ENCODE measurements at regions of chr6 and their contacts with region 1.

Region 1: DNA sequence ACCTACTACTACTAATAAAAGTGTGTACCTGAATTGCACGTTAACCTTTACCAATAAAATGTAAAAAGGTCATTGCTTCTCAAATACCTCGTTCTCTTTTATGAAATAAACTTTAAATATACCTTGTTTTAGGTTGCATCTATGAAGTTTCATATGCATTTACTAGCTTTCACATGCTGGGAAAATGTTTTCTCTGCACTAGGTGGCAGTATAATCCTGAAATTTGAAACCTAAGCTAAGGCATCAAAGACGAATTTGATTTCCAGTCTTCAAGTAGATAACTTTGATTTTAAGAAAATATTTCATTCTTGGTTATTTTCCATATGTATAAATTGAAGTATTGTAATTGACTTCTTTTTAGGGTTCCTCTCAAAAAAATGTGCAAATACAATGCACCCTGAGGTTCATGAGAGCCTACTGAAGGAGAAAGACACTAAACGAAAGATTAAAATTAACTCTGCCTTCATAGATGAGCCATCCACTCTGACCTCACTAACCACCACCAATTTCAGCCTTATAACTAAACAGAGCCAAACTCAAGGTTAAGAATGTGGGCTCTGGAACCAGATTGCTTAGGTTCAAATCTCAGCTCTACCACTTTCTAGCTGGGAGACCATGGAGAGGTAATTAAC is 7.3 kb upstream of the COL9A1 start:
- DNase-seq: no peak
- CTCF ChIP-seq: peak; percentile 64

Region 2: GRCh38 chr6:69957985-69958559 is 352.1 kb before region 1 on chr6:
- CTCF ChIA-PET with region 1: no interaction called
- POLR2A ChIA-PET with region 1: no interaction called
- DNase-seq: no peak
- CTCF ChIP-seq: no peak

Region 3: DNA sequence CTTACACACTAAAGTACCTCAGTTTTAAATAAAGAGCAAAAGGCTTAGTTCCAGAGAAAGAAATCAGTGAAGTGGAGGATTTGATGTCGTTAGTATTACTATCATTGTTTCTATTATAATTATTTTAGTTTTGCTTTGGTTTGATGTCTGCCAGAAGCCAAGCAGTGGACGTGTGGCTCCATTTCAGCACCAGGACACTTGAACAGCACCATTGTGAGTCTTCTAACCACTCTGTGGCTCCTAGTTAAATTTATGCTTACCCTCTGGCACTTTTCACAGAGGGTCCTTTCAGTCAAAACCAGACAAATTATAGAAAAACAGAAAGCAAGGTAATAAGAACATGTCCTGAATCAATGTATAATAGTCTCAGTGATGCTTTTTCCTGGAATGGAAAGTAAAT is 10.7 kb before region 1 on chr6:
- CTCF ChIA-PET with region 1: interaction called, 58 read pairs
- POLR2A ChIA-PET with region 1: no interaction called
- DNase-seq: no peak
- CTCF ChIP-seq: no peak

Region 4: DNA sequence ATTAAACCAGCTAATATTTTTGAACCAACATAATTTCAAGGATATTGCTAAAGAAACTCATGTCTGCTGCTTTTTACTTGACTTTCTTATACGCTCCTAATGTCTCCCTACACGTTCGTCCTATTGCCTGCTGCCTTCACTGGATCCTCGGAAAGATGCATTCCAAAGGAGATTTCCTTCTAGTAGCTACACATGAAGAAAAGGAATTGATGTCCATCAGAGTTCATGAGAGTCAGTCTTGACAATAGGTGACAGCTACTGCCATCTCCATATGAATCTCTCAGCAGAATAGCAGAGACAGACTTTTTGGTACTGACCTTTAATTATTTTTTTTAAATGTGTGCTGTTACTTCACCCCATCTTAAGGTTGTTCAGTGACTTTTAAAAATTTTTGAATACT is 16.9 kb after region 1 on chr6:
- CTCF ChIA-PET with region 1: interaction called, 36 read pairs
- POLR2A ChIA-PET with region 1: no interaction called
- DNase-seq: no peak
- CTCF ChIP-seq: no peak

Region 5: GRCh38 chr6:70470016-70470415 is 159.8 kb after region 1 on chr6:
- CTCF ChIA-PET with region 1: no interaction called
- POLR2A ChIA-PET with region 1: no interaction called
- DNase-seq: no peak
- CTCF ChIP-seq: no peak

Region 6: GRCh38 chr6:71012866-71013469 is 702.8 kb after region 1 on chr6:
- CTCF ChIA-PET with region 1: interaction called, 39 read pairs
- POLR2A ChIA-PET with region 1: no interaction called
- DNase-seq: peak; percentile 56
- CTCF ChIP-seq: peak; percentile 85